Endothelial cell of umbilical vein (primary cell): ENCODE measurements at regions of chr1 and their contacts with region 1.

Region 1: GRCh38 chr1:93814059-93814794 is 64.8 kb downstream of the DNTTIP2 start:
- DNase-seq: peak; percentile 89
- H3K4me3 ChIP-seq: no peak overlapping the region
- H3K27ac ChIP-seq: no peak overlapping the region
- H3K4me1 ChIP-seq: peaks cover 39% of the 10 kb centered on the region
- H3K27me3 ChIP-seq: no peaks in the 10 kb centered on the region
- CTCF ChIP-seq: peak; percentile 89 to 97
- POLR2A ChIP-seq: no peak

Region 2: DNA sequence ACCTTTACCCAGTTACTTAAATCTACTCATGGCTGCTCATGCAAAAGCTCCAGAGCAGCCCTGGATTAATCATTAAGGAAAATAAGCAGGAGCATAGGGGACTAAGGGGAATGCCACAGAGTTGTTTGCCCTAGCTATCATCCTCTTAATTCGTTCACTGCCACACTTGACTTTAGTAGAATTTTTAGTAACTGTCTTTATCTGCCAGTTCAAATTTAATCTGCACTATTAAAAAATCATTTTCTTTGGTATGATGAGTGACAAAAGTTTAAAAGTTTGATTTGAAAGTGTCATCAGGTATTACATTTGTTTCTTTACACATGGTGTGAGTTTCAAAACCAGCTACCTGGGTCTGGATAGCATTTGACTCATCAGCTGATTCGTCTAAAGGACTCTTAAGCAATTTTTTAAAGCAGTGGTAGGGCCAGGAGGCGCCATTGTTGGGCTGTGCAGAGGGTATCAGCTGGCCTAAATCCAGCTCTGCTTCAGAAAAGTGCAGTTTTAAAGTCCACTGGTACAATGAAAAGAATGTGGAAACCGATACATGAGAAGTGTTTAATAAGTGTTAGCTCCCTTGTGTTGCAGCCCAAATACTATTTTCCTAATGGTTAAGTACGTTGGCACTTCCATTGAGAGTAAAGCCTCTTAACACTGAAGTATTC is 538.5 kb before region 1 on chr1:
- CTCF ChIA-PET with region 1: no interaction called
- POLR2A ChIA-PET with region 1: no interaction called
- dilution Hi-C with region 1: no loop called
- intact Hi-C with region 1: no loop called
- DNase-seq: no peak
- H3K4me3 ChIP-seq: no peak overlapping the region
- H3K27ac ChIP-seq: no peak overlapping the region
- H3K4me1 ChIP-seq: no peaks in the 10 kb centered on the region
- H3K27me3 ChIP-seq: no peaks in the 10 kb centered on the region
- CTCF ChIP-seq: no peak
- POLR2A ChIP-seq: no peak

Region 3: DNA sequence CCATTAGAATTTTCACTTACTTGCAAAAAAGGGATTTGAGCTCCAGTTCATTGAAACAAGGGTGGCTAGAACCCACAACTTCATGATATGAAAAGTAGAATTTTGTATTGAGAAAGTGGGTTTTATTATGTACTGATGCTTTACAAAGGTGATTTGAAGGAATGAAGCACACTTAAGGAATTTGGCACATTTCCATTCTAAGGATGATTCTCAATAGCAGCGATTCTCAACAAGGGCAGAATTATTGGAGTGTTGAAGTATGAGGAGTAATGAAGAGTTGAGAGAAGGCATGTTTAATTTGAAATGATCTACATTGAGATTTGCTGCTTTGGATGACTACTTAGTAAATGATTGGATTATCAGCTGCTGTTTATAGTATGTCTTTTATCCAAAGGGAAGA is 311.7 kb before region 1 on chr1:
- CTCF ChIA-PET with region 1: no interaction called
- POLR2A ChIA-PET with region 1: no interaction called
- dilution Hi-C with region 1: no loop called
- intact Hi-C with region 1: no loop called
- DNase-seq: no peak
- H3K4me3 ChIP-seq: no peak overlapping the region
- H3K27ac ChIP-seq: no peak overlapping the region
- H3K4me1 ChIP-seq: peaks cover 4% of the 10 kb centered on the region
- H3K27me3 ChIP-seq: no peaks in the 10 kb centered on the region
- CTCF ChIP-seq: no peak
- POLR2A ChIP-seq: no peak

Region 4: DNA sequence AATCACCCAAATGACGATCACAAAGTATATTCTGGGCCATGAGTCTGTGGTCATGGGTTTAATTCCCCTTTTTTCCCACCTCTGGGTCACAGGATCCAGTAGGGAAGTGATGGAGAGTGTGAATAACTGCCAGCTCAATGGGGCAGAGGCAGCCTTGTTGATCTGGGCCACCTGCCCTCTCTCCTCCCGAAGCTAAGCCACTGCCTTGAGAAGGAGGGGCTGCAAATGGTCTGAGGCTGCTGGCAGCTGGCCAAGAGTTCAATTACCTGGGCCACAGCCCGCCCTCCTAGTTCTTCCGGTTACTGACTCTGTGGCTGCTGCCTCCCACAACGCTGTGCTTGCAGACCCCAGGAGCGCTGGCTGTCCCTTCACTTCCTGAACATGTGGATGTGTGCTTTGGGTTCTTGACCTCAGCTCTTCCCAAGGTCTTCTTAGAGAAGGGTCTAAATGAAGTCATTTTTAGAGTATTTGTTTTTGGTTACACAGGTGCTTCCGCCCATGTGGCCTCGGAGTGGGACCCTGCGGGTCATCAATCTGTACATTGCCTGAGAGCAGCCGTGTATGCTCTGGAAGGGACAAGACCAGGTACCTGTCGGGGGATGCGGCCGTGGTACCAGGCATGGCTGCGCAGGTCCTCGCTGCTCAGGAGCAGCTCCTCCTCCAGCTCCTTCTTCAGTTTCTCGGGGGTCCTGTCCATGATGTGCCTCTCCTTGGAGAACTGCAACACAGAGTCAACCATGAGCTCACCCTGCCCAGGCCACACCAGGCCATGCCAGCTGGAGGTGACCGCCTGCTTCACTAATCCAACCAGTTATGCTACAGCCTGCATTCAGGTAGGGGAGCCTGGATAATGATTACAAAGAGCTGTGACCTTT is 222.3 kb before region 1 on chr1:
- CTCF ChIA-PET with region 1: interaction called, 12 read pairs
- POLR2A ChIA-PET with region 1: no interaction called
- dilution Hi-C with region 1: no loop called
- intact Hi-C with region 1: no loop called
- DNase-seq: no peak
- H3K4me3 ChIP-seq: no peak overlapping the region
- H3K27ac ChIP-seq: no peak overlapping the region
- H3K4me1 ChIP-seq: peaks cover 32% of the 10 kb centered on the region
- H3K27me3 ChIP-seq: no peaks in the 10 kb centered on the region
- CTCF ChIP-seq: no peak
- POLR2A ChIP-seq: no peak

Region 5: DNA sequence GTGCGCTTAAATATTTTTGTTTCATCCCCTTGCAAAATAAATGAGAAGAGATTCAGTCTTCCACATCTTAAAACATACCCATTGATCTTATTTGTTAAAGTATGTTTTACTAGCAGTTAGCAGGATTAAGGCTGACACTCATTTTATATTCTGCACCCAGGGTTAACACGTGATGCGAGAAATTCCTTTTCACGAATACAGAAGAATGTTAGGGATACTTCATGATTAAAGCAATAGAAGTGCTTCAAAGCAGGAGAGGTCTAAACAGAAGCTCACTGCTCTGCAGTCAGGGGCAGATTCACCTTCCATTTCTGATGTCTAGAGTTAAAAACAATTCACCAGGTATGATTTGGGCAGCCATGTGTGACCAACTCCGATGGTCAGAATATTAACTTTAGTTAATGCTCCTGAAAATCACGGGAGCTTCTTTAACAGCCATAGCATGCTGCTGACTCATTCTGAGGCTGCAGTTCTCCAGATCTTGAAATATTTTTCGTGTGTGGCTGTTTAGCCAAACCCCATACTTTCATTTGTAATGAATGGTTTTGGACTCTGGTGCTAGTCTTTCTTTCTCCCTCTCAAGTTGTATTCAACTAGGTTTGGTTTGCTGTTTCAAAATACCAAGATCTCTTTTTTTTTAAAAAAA is 152.3 kb before region 1 on chr1:
- CTCF ChIA-PET with region 1: interaction called, 20 read pairs
- POLR2A ChIA-PET with region 1: interaction called, 3 read pairs
- dilution Hi-C with region 1: loop called (anchors 25 kb)
- intact Hi-C with region 1: no loop called
- DNase-seq: peak; percentile 63
- H3K4me3 ChIP-seq: peak overlapping the region in 1 of 3 experiments; percentile 18
- H3K27ac ChIP-seq: peak overlapping the region; percentile 92
- H3K4me1 ChIP-seq: peaks cover 50% of the 10 kb centered on the region
- H3K27me3 ChIP-seq: no peaks in the 10 kb centered on the region
- CTCF ChIP-seq: no peak
- POLR2A ChIP-seq: no peak

Region 6: GRCh38 chr1:93692983-93693591 is 121.1 kb before region 1 on chr1:
- CTCF ChIA-PET with region 1: interaction called, 18 read pairs
- POLR2A ChIA-PET with region 1: no interaction called
- dilution Hi-C with region 1: no loop called
- intact Hi-C with region 1: no loop called
- DNase-seq: peak; percentile 77
- H3K4me3 ChIP-seq: no peak overlapping the region
- H3K27ac ChIP-seq: peak overlapping the region; percentile 85
- H3K4me1 ChIP-seq: peaks cover 27% of the 10 kb centered on the region
- H3K27me3 ChIP-seq: no peaks in the 10 kb centered on the region
- CTCF ChIP-seq: no peak
- POLR2A ChIP-seq: no peak

Region 7: DNA sequence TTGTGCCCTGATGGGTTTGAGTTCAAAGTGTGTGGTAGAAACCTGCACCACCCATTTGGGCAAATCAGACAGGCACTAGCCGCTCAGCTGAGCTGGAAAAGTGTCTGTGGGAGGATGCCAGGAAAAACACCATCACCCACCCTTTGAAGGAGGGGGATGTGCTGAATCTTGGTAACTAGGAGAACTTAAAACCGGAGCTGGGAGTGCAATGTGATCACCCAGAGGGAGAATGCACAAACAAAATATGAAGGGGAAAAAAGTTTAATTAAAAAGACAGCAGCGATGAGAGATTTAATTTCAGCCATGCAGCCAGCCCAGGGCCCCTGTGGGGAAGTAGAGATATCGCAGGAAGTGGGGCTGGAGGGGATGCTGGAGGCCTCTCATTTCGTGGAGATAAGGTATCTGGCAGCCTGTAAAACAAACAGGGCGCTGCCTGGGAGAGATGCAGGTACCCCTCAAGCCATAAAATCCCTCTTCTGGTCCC is 45.8 kb before region 1 on chr1:
- CTCF ChIA-PET with region 1: interaction called, 10 read pairs
- POLR2A ChIA-PET with region 1: no interaction called
- dilution Hi-C with region 1: no loop called
- intact Hi-C with region 1: no loop called
- DNase-seq: no peak
- H3K4me3 ChIP-seq: no peak overlapping the region
- H3K27ac ChIP-seq: no peak overlapping the region
- H3K4me1 ChIP-seq: no peaks in the 10 kb centered on the region
- H3K27me3 ChIP-seq: no peaks in the 10 kb centered on the region
- CTCF ChIP-seq: no peak
- POLR2A ChIP-seq: no peak